ENCODE measurements at regions of chr11 and their contacts with region 1.

Region 1: GRCh38 chr11:117817368-117818040 is 7.0 kb downstream of the FXYD2 start:
- DNase-seq: peak; percentile 58 to 70
- ATAC-seq: peak; percentile 48 to 81; a peak in 4 of 6 replicates
- H3K4me3 ChIP-seq: no peak overlapping the region
- H3K27ac ChIP-seq: peak overlapping the region; percentile 73 to 75; a peak in 5 of 6 replicates
- H3K4me1 ChIP-seq: peaks cover 41% of the 10 kb centered on the region
- CTCF ChIP-seq: peak; percentile 85
- EP300 ChIP-seq: no peak
- POLR2A ChIP-seq: no peak
- RAD21 ChIP-seq: peak; percentile 73 to 82

Region 2: GRCh38 chr11:117828611-117829368 is 11.3 kb after region 1 on chr11:
- CTCF ChIA-PET with region 1: interaction called, 37 read pairs
- POLR2A ChIA-PET with region 1: no interaction called
- DNase-seq: peak; percentile 29 to 30
- ATAC-seq: peak; percentile 69 to 71
- H3K4me3 ChIP-seq: no peak overlapping the region
- H3K27ac ChIP-seq: peak overlapping the region; percentile 62 to 80; a peak in 5 of 6 replicates
- H3K4me1 ChIP-seq: peaks cover 60% of the 10 kb centered on the region
- CTCF ChIP-seq: no peak
- EP300 ChIP-seq: no peak
- POLR2A ChIP-seq: no peak
- RAD21 ChIP-seq: no peak

Region 3: GRCh38 chr11:118051611-118052461 is 234.3 kb after region 1 on chr11:
- CTCF ChIA-PET with region 1: interaction called, 18 read pairs
- POLR2A ChIA-PET with region 1: no interaction called
- DNase-seq: no peak
- ATAC-seq: no peak
- H3K4me3 ChIP-seq: no peak overlapping the region
- H3K27ac ChIP-seq: no peak overlapping the region
- H3K4me1 ChIP-seq: no peaks in the 10 kb centered on the region
- CTCF ChIP-seq: no peak
- EP300 ChIP-seq: no peak
- POLR2A ChIP-seq: no peak
- RAD21 ChIP-seq: no peak